Uterus (tissue), 4 donors: ENCODE measurements at regions of chr10 and their contacts with region 1.

Region 1: GRCh38 chr10:95374597-95375209 is 83.9 kb upstream of the PDLIM1 start:
- DNase-seq: peak; percentile 78 to 86
- H3K4me3 ChIP-seq: no peak overlapping the region
- H3K27ac ChIP-seq: peak overlapping the region in 1 of 2 donors; percentile 79
- H3K4me1 ChIP-seq: peaks cover 0 to 4% of the 10 kb centered on the region in 2 donors
- H3K27me3 ChIP-seq: no peaks in the 10 kb centered on the region
- CTCF ChIP-seq: peak; percentile 82 to 91 (median 88)
- POLR2A ChIP-seq: no peak

Region 2: GRCh38 chr10:95319239-95319638 is 55.5 kb before region 1 on chr10:
- intact Hi-C with region 1: no loop called
- DNase-seq: no peak
- H3K4me3 ChIP-seq: no peak overlapping the region
- H3K27ac ChIP-seq: no peak overlapping the region
- H3K4me1 ChIP-seq: no peaks in the 10 kb centered on the region
- H3K27me3 ChIP-seq: no peaks in the 10 kb centered on the region
- CTCF ChIP-seq: no peak
- POLR2A ChIP-seq: no peak

Region 3: GRCh38 chr10:95430231-95430951 is 55.7 kb after region 1 on chr10:
- intact Hi-C with region 1: loop called (anchors 10 kb)
- DNase-seq: peak; percentile 53 to 74
- H3K4me3 ChIP-seq: no peak overlapping the region
- H3K27ac ChIP-seq: peak overlapping the region; percentile 65 to 93
- H3K4me1 ChIP-seq: peaks cover 0 to 11% of the 10 kb centered on the region in 2 donors
- H3K27me3 ChIP-seq: no peaks in the 10 kb centered on the region
- CTCF ChIP-seq: peak; percentile 93 to 96 (median 96)
- POLR2A ChIP-seq: no peak